IMR-90 (cell line): ENCODE measurements at regions of chr9 and their contacts with region 1.

Region 1: GRCh38 chr9:6353851-6354686 is 25.9 kb downstream of the TPD52L3 start:
- DNase-seq: peak; percentile 77
- ATAC-seq: peak; percentile 96
- H3K4me3 ChIP-seq: no peak overlapping the region
- H3K27ac ChIP-seq: no peak overlapping the region
- H3K4me1 ChIP-seq: peaks cover 8% of the 10 kb centered on the region
- H3K27me3 ChIP-seq: peaks cover 5% of the 10 kb centered on the region
- CTCF ChIP-seq: peak; percentile 87
- POLR2A ChIP-seq: no peak
- RAD21 ChIP-seq: peak; percentile 93

Region 2: DNA sequence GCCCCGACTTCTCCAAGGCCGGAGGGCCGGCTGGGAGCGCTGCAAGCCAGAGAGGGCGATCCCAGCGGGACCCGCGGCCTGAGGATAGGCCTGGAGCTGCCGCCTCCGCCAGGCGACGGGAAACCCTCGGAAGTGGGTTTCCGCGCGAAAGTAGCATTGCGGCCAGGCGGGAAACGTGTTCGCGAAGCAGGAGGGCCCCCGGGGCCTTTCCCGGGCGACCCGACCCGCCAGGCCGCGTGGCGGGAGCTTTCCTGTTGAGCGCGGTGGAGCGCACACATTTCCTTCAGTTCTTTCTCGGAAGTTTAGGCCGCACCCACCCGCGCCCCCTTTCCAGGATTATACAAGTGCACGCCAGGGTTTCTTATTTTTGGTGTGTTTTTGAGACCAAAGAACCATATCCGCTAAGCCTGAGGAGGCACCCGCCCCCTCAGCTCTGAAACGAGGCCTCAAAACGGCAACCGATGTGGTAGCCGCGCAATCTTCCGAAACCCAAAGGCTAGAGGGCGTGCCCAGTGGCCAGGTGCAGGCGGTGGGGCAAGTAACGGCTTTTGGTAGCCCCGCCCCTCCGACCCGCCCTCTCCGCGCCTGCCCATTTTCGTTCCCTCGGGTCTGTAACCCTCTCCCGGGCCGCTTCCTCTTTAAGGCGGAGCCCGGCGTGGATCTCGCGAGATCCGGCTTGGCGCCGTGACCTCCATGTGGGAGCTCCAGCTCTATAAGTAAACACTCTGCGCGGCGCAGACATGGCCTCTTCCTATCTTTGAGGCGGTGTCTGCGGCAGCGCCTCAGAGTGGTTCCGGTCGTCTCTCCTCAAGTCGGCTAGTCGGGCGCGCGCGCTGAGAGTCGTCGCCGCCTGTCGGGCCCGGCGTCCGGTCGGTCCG is 58.7 kb after region 1 on chr9 and contains the start of gene UHRF2:
- CTCF ChIA-PET with region 1: no interaction called
- POLR2A ChIA-PET with region 1: interaction called, 4 read pairs
- dilution Hi-C with region 1: no loop called
- in situ Hi-C with region 1: no loop called
- intact Hi-C with region 1: loop called (anchors 1 kb)
- DNase-seq: peak; percentile 97
- ATAC-seq: peak; percentile 95
- H3K4me3 ChIP-seq: peak within 1 kb of the TSS; percentile 83
- H3K27ac ChIP-seq: peak within 1 kb of the TSS; percentile 83
- H3K4me1 ChIP-seq: peaks cover 8% of the 10 kb centered on the region
- H3K27me3 ChIP-seq: no peaks in the 10 kb centered on the region
- CTCF ChIP-seq: 0 out of 2 replicates have a peak, but pooled peaks have one; percentile 2
- POLR2A ChIP-seq: peak; percentile 92
- RAD21 ChIP-seq: no peak
- total RNA-seq, gene UHRF2: 37.3 and 55.3 TPM in 2 replicates

Region 3: DNA sequence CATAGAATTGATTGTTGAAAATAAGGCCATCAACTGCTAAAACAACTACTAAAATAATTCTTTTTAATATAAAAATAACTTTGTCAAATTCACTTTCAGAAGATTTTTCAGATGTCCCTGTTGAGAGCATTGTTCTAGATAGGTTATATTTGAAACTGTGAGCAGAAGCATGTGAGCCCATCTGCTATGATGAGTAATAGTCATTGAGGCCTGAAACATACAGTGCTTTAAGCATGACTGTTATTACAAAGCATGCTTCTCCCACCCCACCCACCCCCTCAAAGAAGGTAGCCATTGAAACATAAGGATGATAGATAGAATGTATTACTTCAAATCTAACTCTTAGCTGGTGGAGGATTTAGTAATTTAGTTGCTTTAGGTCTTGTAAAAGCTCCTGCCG is 144.9 kb after region 1 on chr9:
- CTCF ChIA-PET with region 1: interaction called, 3 read pairs
- POLR2A ChIA-PET with region 1: no interaction called
- dilution Hi-C with region 1: no loop called
- in situ Hi-C with region 1: no loop called
- intact Hi-C with region 1: loop called (anchors 10 kb)
- DNase-seq: peak; percentile 85
- ATAC-seq: peak; percentile 87
- H3K4me3 ChIP-seq: no peak overlapping the region
- H3K27ac ChIP-seq: 0 out of 2 replicates have a peak overlapping the region, but pooled peaks have one; percentile 3
- H3K4me1 ChIP-seq: peaks cover 5% of the 10 kb centered on the region
- H3K27me3 ChIP-seq: no peaks in the 10 kb centered on the region
- CTCF ChIP-seq: no peak
- POLR2A ChIP-seq: no peak
- RAD21 ChIP-seq: no peak

Region 4: GRCh38 chr9:6549106-6549800 is 195.2 kb after region 1 on chr9:
- CTCF ChIA-PET with region 1: no interaction called
- POLR2A ChIA-PET with region 1: no interaction called
- dilution Hi-C with region 1: no loop called
- in situ Hi-C with region 1: no loop called
- intact Hi-C with region 1: no loop called
- DNase-seq: no peak
- ATAC-seq: no peak
- H3K4me3 ChIP-seq: no peak overlapping the region
- H3K27ac ChIP-seq: no peak overlapping the region
- H3K4me1 ChIP-seq: peaks cover 9% of the 10 kb centered on the region
- H3K27me3 ChIP-seq: no peaks in the 10 kb centered on the region
- CTCF ChIP-seq: no peak
- POLR2A ChIP-seq: no peak
- RAD21 ChIP-seq: no peak

Region 5: DNA sequence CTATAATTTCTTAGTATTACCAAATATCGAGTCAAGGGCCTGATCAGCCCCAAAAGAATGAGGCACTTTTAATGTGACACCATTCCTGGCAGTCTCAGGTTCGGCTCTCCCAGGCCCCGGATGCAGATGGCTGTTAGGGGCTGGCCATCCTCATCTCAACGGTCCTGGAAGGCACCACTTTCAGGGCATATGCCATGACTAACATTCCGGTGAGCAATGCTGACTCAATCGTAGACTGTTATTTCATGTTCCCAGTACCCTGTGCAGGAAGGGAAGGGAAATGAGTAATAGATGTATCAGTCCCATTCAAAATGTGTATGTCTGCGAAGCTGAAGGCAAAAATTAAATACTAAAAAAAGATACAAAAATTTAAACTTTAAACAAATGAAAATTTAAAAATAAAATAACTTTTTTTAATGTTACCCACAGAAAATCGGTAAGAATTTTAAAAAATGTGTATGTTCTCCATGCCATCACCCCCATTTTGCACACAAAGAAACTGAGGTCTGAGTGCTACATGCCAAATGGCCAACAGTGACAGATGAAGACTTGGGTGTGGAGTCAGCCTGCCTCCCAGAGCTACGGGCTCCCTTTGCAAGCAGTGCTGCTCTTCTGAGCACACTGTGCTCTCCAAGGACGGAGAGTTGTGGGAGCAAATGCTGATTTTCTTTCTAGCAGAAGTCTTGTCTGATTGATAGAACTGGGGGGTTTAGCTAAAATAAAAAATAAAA is 212.5 kb after region 1 on chr9:
- CTCF ChIA-PET with region 1: interaction called, 8 read pairs
- POLR2A ChIA-PET with region 1: no interaction called
- dilution Hi-C with region 1: no loop called
- in situ Hi-C with region 1: loop called (anchors 5 kb)
- intact Hi-C with region 1: loop called (anchors 1 kb)
- DNase-seq: peak; percentile 99
- ATAC-seq: peak; percentile 85
- H3K4me3 ChIP-seq: peak overlapping the region; percentile 38; the same call in 1 of the 2 replicates
- H3K27ac ChIP-seq: peak overlapping the region; percentile 98
- H3K4me1 ChIP-seq: peaks cover 12% of the 10 kb centered on the region
- H3K27me3 ChIP-seq: no peaks in the 10 kb centered on the region
- CTCF ChIP-seq: no peak
- POLR2A ChIP-seq: peak; percentile 52; the same call in 1 of the 2 replicates
- RAD21 ChIP-seq: 0 out of 2 replicates have a peak, but pooled peaks have one; percentile 11

Region 6: DNA sequence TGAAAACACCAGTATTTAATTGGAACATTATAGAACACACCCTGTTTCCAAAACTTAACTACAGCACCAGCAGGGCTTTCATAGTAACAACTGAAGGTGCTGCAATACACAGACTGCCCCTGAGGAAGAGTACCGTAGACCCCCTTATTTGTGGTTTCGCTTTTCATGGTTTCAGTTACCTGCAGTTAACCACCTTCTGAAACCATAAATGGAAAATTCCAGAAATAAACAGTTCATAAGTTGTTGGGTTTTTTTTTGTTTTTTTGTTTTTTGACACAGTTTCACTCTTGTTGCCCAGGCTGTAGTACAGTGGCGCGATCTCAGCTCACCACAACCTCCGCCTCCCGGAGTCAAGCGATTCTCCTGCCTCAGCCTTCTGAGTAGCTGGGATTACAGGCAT is 301.0 kb after region 1 on chr9:
- CTCF ChIA-PET with region 1: no interaction called
- POLR2A ChIA-PET with region 1: no interaction called
- dilution Hi-C with region 1: no loop called
- in situ Hi-C with region 1: loop called (anchors 5 kb)
- intact Hi-C with region 1: no loop called
- DNase-seq: no peak
- ATAC-seq: no peak
- H3K4me3 ChIP-seq: no peak overlapping the region
- H3K27ac ChIP-seq: no peak overlapping the region
- H3K4me1 ChIP-seq: no peaks in the 10 kb centered on the region
- H3K27me3 ChIP-seq: no peaks in the 10 kb centered on the region; the same call in 1 of the 2 replicates
- CTCF ChIP-seq: no peak
- POLR2A ChIP-seq: no peak
- RAD21 ChIP-seq: no peak

Region 7: DNA sequence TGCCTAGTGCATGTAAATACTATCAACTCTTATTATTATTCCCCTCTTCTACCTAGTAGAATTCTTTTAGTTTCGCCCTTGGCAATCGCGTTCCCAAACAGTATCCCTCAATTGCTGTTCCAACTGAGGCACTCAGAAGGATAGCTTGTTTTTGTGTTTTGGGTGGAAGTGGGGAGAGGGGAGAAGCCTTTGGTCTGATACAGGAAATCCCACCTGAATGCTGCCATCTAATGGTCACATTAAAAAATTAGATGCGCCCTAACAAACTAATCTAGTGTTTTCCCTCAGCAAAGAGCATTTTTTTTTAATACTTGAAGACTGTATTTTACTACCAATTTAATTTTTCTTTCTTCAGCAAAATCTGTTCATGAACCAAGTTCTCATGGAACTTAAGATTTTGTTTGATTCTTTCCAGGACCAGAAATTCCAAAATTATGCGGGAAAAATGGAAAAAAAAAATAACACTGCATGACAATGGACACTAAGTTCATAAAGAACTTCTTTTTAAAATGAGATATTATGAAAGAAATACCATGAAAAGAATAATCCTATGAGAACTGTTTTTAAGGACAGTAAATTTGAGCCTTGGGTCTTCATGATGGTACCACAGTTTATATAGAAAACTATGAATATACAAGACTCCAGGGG is 313.7 kb after region 1 on chr9:
- CTCF ChIA-PET with region 1: no interaction called
- POLR2A ChIA-PET with region 1: no interaction called
- dilution Hi-C with region 1: no loop called
- in situ Hi-C with region 1: no loop called
- intact Hi-C with region 1: loop called (anchors 1 kb)
- DNase-seq: peak; percentile 44
- ATAC-seq: peak; percentile 65
- H3K4me3 ChIP-seq: no peak overlapping the region
- H3K27ac ChIP-seq: no peak overlapping the region
- H3K4me1 ChIP-seq: no peaks in the 10 kb centered on the region
- H3K27me3 ChIP-seq: peaks cover 2% of the 10 kb centered on the region
- CTCF ChIP-seq: peak; percentile 64
- POLR2A ChIP-seq: no peak
- RAD21 ChIP-seq: peak; percentile 51